Endothelial cell of umbilical vein (primary cell): ENCODE measurements at regions of chr1 and their contacts with region 1.

Region 1: GRCh38 chr1:93814059-93814794 is 64.8 kb downstream of the DNTTIP2 start:
- DNase-seq: peak; percentile 89
- H3K4me3 ChIP-seq: no peak overlapping the region
- H3K27ac ChIP-seq: no peak overlapping the region
- H3K4me1 ChIP-seq: peaks cover 39% of the 10 kb centered on the region
- H3K27me3 ChIP-seq: no peaks in the 10 kb centered on the region
- CTCF ChIP-seq: peak; percentile 89 to 97
- POLR2A ChIP-seq: no peak

Region 2: GRCh38 chr1:93552741-93553455 is 261.3 kb before region 1 on chr1:
- CTCF ChIA-PET with region 1: interaction called, 4 read pairs
- POLR2A ChIA-PET with region 1: no interaction called
- dilution Hi-C with region 1: no loop called
- intact Hi-C with region 1: loop called (anchors 1 kb)
- DNase-seq: peak; percentile 70
- H3K4me3 ChIP-seq: no peak overlapping the region
- H3K27ac ChIP-seq: peak overlapping the region; percentile 34
- H3K4me1 ChIP-seq: peaks cover 58% of the 10 kb centered on the region
- H3K27me3 ChIP-seq: no peaks in the 10 kb centered on the region
- CTCF ChIP-seq: no peak
- POLR2A ChIP-seq: no peak

Region 3: GRCh38 chr1:93615582-93616150 is 198.6 kb before region 1 on chr1:
- CTCF ChIA-PET with region 1: interaction called, 10 read pairs
- POLR2A ChIA-PET with region 1: no interaction called
- dilution Hi-C with region 1: no loop called
- intact Hi-C with region 1: no loop called
- DNase-seq: peak; percentile 28
- H3K4me3 ChIP-seq: no peak overlapping the region
- H3K27ac ChIP-seq: peak overlapping the region; percentile 21
- H3K4me1 ChIP-seq: peaks cover 34% of the 10 kb centered on the region
- H3K27me3 ChIP-seq: no peaks in the 10 kb centered on the region
- CTCF ChIP-seq: no peak
- POLR2A ChIP-seq: no peak

Region 4: DNA sequence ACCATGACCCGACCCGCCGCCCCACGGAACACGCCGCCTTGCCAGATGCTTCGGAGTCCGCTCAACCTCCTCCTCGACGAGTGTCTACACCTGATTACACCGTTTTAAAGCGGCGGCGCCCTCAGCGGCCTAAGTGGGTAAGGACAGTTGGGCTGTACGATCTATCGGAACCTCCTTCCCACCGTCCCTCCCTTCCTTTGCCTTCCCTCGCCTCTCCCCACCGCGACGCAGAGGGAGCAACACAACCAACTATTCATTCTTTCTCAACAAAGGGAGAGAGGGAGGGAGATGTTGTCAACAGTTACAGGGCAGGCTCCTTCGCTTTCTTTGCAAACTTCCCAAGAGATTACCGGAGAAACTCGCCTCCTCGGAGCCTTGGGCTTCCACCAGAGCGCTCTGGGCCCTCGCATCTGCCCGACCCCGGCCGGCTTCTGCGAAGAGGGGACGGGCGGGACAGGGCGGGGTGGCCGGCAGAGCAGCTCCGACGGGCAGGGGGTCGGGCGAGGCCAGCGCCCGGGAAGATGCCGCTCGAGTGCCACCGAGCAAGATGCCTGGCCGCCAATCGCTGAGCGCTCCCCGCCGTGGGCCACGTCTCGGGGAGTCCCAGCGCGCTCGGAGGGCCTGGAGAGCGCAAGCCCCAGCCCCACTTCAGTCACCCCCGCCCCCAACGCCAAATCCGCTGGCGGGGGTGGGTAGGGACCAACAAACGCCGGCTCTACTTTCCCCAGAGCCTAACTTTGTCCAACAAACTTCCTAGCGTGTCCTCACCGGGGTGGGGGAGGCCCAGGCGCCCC is 133.3 kb before region 1 on chr1:
- CTCF ChIA-PET with region 1: interaction called, 122 read pairs
- POLR2A ChIA-PET with region 1: no interaction called
- dilution Hi-C with region 1: no loop called
- intact Hi-C with region 1: loop called (anchors 1 kb)
- DNase-seq: peak; percentile 89
- H3K4me3 ChIP-seq: peak overlapping the region; percentile 55 to 80 (median 72)
- H3K27ac ChIP-seq: peak overlapping the region; percentile 84
- H3K4me1 ChIP-seq: peaks cover 42% of the 10 kb centered on the region
- H3K27me3 ChIP-seq: no peaks in the 10 kb centered on the region
- CTCF ChIP-seq: peak; percentile 38 to 70
- POLR2A ChIP-seq: peak; percentile 62

Region 5: DNA sequence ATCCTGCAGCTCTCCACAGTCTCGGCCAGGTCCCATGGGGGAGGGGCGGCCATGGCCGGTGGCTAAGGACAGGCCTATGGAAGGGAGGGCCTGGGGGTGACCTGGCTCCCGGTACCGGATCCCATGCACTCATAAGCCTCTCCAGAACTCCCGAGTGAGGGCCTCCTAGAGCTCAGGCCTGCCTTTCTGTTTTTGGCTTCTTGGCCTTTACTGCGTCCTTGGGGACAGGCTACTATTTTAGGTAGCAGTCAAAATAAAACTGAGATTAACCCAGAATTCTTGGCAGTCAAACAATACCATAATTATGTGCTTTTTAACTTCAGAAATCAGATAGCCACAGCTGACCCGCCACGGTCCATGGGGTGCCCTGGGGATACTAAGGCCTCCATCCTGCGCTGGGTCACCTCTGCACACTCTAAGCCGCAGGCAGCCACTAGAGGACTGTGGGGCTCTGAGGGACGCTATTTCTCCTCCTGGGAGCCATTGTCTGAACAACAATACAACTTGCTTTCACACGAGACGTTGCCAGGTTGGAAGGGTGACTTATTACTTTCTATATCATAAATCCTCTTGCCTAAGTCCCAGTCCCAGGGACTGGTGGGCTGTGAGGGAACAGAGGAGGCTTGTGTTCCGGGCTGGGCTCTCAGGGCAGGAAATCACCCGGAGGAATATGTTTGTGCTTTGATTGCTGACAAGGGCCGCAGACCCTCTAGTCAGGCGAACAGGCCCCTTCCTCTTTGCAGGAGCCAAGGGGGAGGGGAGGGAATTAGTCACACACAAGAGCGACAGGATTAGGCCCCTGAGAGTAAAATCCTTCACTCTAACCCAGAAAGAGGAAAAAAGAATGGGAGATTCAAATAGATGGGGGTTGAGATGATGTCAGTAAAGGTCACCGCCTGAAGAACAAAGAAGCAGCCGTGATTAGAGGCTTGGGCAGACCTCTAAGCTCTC is 91.9 kb before region 1 on chr1:
- CTCF ChIA-PET with region 1: interaction called, 10 read pairs
- POLR2A ChIA-PET with region 1: no interaction called
- dilution Hi-C with region 1: no loop called
- intact Hi-C with region 1: loop called (anchors 2 kb)
- DNase-seq: peak; percentile 89
- H3K4me3 ChIP-seq: no peak overlapping the region
- H3K27ac ChIP-seq: peak overlapping the region; percentile 74
- H3K4me1 ChIP-seq: peaks cover 23% of the 10 kb centered on the region
- H3K27me3 ChIP-seq: no peaks in the 10 kb centered on the region
- CTCF ChIP-seq: peak; percentile 21 to 36
- POLR2A ChIP-seq: no peak

Region 6: DNA sequence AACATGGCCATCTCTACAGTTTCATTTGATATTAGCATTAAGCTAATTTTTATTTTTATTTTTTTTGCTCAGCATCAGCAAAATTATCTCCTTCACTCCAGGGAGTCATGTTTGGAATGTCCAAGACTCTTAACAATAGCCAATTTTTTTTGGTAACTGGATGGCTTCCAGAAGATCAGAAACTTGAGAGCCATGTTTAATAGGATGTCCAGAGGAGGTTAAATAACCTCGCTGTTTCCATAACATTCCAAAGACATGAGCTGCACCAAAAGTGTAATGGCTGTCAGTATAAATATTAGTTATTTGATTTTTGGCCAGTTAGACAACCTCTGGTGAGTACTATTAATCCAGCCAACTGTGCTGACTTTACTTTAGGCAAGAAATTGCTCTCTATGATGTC is 15.9 kb before region 1 on chr1:
- CTCF ChIA-PET with region 1: interaction called, 14 read pairs
- POLR2A ChIA-PET with region 1: no interaction called
- dilution Hi-C with region 1: no loop called
- intact Hi-C with region 1: no loop called
- DNase-seq: peak; percentile 82
- H3K4me3 ChIP-seq: no peak overlapping the region
- H3K27ac ChIP-seq: peak overlapping the region; percentile 76
- H3K4me1 ChIP-seq: peaks cover 30% of the 10 kb centered on the region
- H3K27me3 ChIP-seq: no peaks in the 10 kb centered on the region
- CTCF ChIP-seq: no peak
- POLR2A ChIP-seq: no peak

Region 7: GRCh38 chr1:93960641-93961147 is 146.5 kb after region 1 on chr1:
- CTCF ChIA-PET with region 1: no interaction called
- POLR2A ChIA-PET with region 1: no interaction called
- dilution Hi-C with region 1: no loop called
- intact Hi-C with region 1: no loop called
- DNase-seq: no peak
- H3K4me3 ChIP-seq: no peak overlapping the region
- H3K27ac ChIP-seq: no peak overlapping the region
- H3K4me1 ChIP-seq: no peaks in the 10 kb centered on the region
- H3K27me3 ChIP-seq: peaks cover 9 to 21% of the 10 kb centered on the region in 2 experiments
- CTCF ChIP-seq: no peak
- POLR2A ChIP-seq: no peak

Region 8: GRCh38 chr1:94105957-94106529 is 291.8 kb after region 1 on chr1:
- CTCF ChIA-PET with region 1: no interaction called
- POLR2A ChIA-PET with region 1: no interaction called
- dilution Hi-C with region 1: no loop called
- intact Hi-C with region 1: no loop called
- DNase-seq: no peak
- H3K4me3 ChIP-seq: no peak overlapping the region
- H3K27ac ChIP-seq: no peak overlapping the region
- H3K4me1 ChIP-seq: peaks cover 8% of the 10 kb centered on the region
- H3K27me3 ChIP-seq: no peaks in the 10 kb centered on the region
- CTCF ChIP-seq: no peak
- POLR2A ChIP-seq: no peak